GM13977 (cell line): ENCODE measurements at regions of chr5 and their contacts with region 1.

Region 1: GRCh38 chr5:177403792-177404640 is 3.6 kb upstream of the PFN3 start:
- DNase-seq: peak; percentile 96
- CTCF ChIP-seq: peak; percentile 96

Region 2: GRCh38 chr5:176501333-176501732 is 902.7 kb before region 1 on chr5:
- in situ Hi-C with region 1: no loop called
- DNase-seq: no peak
- CTCF ChIP-seq: no peak

Region 3: DNA sequence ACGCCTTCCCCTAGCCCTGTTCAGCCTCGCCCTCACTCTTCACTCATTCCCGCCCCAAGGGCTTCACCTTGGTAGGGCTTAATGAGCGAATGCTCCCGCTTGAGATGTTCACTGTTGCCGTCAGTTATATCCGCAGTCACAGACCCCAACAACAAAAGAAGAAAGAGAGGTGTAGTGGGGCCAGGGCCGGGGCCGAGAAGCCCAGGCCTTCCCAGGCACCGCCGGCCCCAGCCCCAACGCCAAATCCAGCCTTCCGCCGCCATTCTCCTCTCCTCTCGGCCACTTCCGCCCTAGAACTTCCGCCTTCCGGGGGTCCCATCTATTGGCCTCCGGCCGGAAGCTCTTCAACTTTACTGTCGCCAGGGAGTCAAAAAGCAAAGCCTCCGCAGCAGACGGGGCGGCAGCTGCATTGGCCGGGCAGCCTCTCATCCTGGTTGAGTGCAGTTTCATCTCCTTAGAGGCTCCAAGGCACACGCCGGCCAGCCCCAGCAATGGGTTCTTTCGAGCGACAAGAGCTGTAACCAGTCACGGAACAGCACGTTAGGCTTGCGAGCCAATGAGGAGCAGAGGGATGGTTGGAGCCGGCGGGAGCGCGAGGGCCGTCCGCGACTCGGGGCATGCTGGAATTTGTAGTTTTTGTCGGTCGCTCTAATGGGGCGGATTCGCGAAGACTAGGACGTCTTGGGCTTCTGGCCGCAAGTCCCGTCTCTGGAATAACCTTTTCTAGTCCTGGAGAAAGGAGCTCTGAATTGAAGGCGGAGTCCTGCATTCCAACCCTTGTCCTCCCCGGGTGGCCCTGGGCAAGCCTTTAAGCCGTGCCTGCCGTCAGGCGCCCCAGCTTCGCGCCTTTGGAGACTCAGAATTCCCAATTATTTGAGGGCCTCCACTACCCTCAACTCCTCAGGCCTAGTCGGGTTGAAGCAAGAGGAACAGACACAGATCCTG is 52.4 kb before region 1 on chr5 and contains the start of gene LMAN2:
- in situ Hi-C with region 1: no loop called
- DNase-seq: peak; percentile 94
- CTCF ChIP-seq: no peak

Region 4: GRCh38 chr5:177454397-177455035 is 50.5 kb after region 1 on chr5:
- in situ Hi-C with region 1: loop called (anchors 10 kb)
- DNase-seq: peak; percentile 99
- CTCF ChIP-seq: peak; percentile 96